ENCODE measurements at regions of chr2 and their contacts with region 1.

Region 1: DNA sequence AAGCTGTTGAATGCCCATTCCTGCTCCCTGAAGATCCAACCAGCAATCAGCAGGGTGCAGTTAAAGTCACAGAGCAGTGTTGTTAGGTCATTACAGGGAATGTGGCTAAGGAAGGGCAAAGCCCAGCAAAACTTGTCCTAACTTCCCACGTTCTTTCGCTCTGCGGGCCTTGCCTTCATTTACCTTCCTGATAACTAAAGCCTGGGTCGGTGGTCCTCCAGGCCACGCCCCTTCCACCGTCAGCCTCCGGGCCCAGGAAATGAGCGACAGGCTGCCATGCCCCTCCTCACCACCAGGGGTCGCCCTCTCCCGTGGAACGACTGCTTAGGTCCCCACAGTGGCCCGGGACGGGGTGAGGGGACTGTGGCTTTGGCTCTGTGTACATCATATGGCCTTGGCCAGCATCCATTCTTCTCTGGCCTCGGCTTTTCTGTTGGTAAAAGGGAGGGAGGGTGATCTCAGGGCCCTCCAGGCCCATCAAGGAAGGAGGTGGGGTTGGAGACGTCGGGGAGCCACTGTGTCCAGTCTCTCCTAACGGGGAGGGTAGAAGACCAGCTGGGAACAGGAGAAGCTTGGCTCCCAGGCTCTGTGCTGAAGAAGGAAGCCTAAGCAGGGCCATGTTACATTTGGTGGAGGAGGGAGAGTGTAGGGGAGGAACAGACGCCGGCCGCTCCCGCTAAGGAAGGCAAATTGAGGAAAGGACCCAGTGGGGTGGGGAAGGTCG is 2.2 kb downstream of the SH2D6 start:
- DNase-seq: peak; percentile 88 to 94 (median 90)
- ATAC-seq: peak; percentile 76
- H3K4me3 ChIP-seq: no peak overlapping the region; the same call in 1 of the 2 replicates
- H3K27ac ChIP-seq: peak overlapping the region; percentile 79
- H3K4me1 ChIP-seq: peaks cover 50 to 59% of the 10 kb centered on the region in 2 experiments
- H3K27me3 ChIP-seq: no peaks in the 10 kb centered on the region
- CTCF ChIP-seq: peak; percentile 95 to 99 (median 98)
- EP300 ChIP-seq: peak; percentile 32; the same call in 1 of the 2 replicates
- POLR2A ChIP-seq: peak; percentile 25; the same call in 1 of the 2 replicates
- RAD21 ChIP-seq: peak; percentile 100

Region 2: GRCh38 chr2:85390941-85391669 is 29.6 kb before region 1 on chr2:
- CTCF ChIA-PET with region 1: no interaction called
- POLR2A ChIA-PET with region 1: no interaction called
- in situ Hi-C with region 1: no loop called
- intact Hi-C with region 1: loop called (anchors 1 kb)
- DNase-seq: peak; percentile 79 to 85 (median 81)
- ATAC-seq: peak; percentile 96
- H3K4me3 ChIP-seq: no peak overlapping the region
- H3K27ac ChIP-seq: no peak overlapping the region
- H3K4me1 ChIP-seq: peaks cover 0 to 5% of the 10 kb centered on the region in 2 experiments; a peak in 1 of 5 replicates
- H3K27me3 ChIP-seq: no peaks in the 10 kb centered on the region
- CTCF ChIP-seq: peak; percentile 88 to 92 (median 91)
- EP300 ChIP-seq: no peak
- POLR2A ChIP-seq: no peak
- RAD21 ChIP-seq: peak; percentile 96 to 97

Region 3: DNA sequence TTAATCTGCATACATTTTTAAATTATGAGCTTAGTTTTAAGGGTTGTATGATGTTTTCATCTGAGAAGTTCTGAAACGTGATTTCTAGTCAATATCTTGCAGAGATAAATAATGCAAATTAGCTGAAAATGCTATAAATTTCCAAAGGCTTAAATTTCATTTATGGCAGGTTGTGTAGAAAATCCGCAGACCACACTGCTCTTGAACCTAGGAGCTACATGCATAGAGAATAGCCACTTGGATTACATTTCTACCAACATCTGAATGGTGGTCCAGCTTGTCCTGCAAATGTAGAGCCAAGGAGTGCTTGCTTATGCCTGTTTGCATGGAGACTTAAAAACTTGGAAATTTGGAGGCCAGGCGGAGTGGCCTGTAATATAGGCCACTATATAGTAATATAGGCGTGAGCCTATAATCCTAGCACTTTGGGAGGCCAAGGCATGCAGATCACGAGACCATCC is 125.1 kb after region 1 on chr2:
- CTCF ChIA-PET with region 1: interaction called, 63 read pairs
- POLR2A ChIA-PET with region 1: interaction called, 1,576 read pairs
- in situ Hi-C with region 1: no loop called
- intact Hi-C with region 1: loop called (anchors 1 kb)
- DNase-seq: peak in 2 of 4 experiments; percentile 30 to 61
- ATAC-seq: peak; percentile 64
- H3K4me3 ChIP-seq: no peak overlapping the region
- H3K27ac ChIP-seq: no peak overlapping the region; the same call in 2 of the 3 replicates
- H3K4me1 ChIP-seq: peaks cover 0 to 22% of the 10 kb centered on the region in 2 experiments; a peak in 3 of 5 replicates
- H3K27me3 ChIP-seq: no peaks in the 10 kb centered on the region
- CTCF ChIP-seq: no peak
- EP300 ChIP-seq: no peak
- POLR2A ChIP-seq: no peak; the same call in none of the 2 replicates
- RAD21 ChIP-seq: no peak

Region 4: DNA sequence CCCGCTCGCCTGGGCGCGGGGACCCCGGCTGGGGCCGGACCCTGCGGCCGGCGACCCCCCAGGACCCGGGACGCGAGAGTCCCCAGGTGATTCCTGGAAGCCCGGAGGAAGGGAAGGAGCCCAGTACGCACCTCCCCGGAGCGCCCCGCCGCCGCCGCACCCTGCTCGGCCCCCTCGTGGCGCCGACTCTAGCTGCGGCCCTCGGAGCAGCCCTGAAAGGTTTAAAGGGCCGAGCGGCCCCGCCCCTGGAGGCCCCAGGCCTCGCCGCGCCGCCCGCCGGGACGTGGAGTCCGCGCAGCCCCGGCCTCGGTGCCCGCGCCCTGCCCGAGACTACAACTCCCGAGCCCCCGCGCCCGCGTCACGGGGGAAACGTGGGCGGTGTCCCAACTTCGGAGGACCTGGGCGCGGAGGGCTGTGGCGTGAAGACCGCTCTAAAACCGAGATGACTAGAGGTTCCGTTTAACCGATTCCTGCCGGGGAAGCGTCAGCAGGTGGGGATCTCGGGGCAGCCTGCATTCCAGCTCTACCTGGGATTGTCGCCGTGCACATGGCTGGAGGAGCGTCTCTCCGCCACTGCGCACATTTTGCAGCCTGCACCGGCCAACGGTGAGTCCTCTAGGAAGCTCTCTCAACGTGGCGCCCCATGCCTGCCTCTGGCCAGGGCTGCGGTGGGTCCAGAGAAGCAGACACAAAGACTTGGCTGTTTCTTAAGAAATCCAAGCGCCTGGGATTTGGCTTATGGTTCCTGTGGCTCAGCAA is 182.0 kb after region 1 on chr2 and contains the start of gene TMEM150A:
- CTCF ChIA-PET with region 1: no interaction called
- POLR2A ChIA-PET with region 1: no interaction called
- in situ Hi-C with region 1: no loop called
- intact Hi-C with region 1: loop called (anchors 5 kb)
- DNase-seq: peak; percentile 88 to 94 (median 90)
- ATAC-seq: peak; percentile 97
- H3K4me3 ChIP-seq: peak within 1 kb of the TSS; percentile 79
- H3K27ac ChIP-seq: peak within 1 kb of the TSS; percentile 27
- H3K4me1 ChIP-seq: peaks cover 9 to 34% of the 10 kb centered on the region in 2 experiments; a peak in 4 of 5 replicates
- H3K27me3 ChIP-seq: no peaks in the 10 kb centered on the region
- CTCF ChIP-seq: peak; percentile 22 to 57 (median 45); a peak in 4 of 6 replicates
- EP300 ChIP-seq: no peak
- POLR2A ChIP-seq: peak; percentile 24; the same call in 1 of the 2 replicates
- RAD21 ChIP-seq: peak; percentile 43 to 46; a peak in 3 of 4 replicates
- polyA plus RNA-seq, gene TMEM150A: 3.9 to 5.3 TPM

Region 5: DNA sequence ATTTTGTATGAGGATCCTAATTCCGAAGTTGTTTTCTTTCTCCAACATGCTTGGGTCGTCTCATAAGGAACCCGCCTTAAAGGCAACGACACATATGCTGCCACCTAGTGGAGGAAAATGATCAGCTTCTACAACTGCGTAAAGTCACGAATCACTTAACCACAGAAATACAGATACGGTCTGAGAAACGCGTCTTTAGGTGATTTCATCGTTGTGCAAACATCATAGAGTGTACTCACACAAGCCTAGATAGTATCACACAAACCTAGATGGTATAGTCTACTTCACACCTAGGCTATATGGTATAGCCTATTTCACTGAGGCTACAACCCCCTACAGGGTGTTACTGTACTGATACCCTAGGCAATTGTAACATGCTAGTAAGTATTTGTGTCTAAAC is 286.6 kb after region 1 on chr2:
- CTCF ChIA-PET with region 1: no interaction called
- POLR2A ChIA-PET with region 1: no interaction called
- in situ Hi-C with region 1: no loop called
- intact Hi-C with region 1: loop called (anchors 5 kb)
- DNase-seq: peak; percentile 73 to 87 (median 74)
- ATAC-seq: peak; percentile 89
- H3K4me3 ChIP-seq: no peak overlapping the region
- H3K27ac ChIP-seq: no peak overlapping the region
- H3K4me1 ChIP-seq: peaks cover 5 to 29% of the 10 kb centered on the region in 2 experiments
- H3K27me3 ChIP-seq: peaks cover 0 to 9% of the 10 kb centered on the region in 2 experiments; a peak in 2 of 5 replicates
- CTCF ChIP-seq: peak; percentile 82 to 92 (median 88)
- EP300 ChIP-seq: 0 out of 2 replicates have a peak, but pooled peaks have one; percentile 10
- POLR2A ChIP-seq: no peak
- RAD21 ChIP-seq: peak; percentile 68 to 79

Region 6: DNA sequence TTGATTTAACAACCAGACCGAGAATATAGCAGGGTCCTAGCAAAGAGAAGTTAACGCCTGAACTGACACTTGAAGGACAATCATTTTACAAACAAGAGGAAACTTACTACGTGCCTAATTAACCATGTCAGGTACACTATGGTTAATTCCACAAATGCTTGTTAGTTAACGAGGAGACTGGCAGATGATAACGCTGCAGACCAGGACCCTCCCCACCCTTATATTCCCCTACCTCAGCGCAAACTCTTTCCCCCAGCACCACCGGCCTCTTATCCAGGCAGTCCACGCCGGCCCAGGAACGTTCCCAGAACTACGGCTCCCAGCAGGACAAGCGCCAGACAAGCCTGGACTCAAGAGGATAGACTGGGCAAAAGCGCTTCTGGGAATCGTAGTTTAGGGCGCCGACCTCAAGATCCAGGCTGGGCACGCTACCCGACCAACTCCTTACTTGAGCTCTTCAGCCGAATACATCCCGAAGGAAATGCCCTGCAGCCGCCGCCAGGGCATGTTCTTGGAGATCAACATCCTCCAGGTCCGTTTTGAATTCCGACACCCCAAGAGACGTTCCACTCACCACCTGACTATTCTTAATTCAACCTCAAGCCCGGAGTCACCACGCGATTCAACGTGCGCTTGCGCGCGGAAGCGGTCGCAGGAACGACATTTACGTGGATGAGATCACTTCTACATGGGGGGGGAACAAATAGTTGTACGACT is 684.7 kb after region 1 on chr2 and contains the start of gene POLR1A:
- CTCF ChIA-PET with region 1: no interaction called
- POLR2A ChIA-PET with region 1: no interaction called
- in situ Hi-C with region 1: no loop called
- intact Hi-C with region 1: loop called (anchors 10 kb)
- DNase-seq: peak; percentile 65 to 92 (median 73)
- ATAC-seq: peak; percentile 95
- H3K4me3 ChIP-seq: peak within 1 kb of the TSS; percentile 72
- H3K27ac ChIP-seq: peak within 1 kb of the TSS; percentile 82
- H3K4me1 ChIP-seq: peaks cover 0 to 17% of the 10 kb centered on the region in 2 experiments; a peak in 2 of 5 replicates
- H3K27me3 ChIP-seq: no peaks in the 10 kb centered on the region
- CTCF ChIP-seq: no peak
- EP300 ChIP-seq: 0 out of 2 replicates have a peak, but pooled peaks have one; percentile 1
- POLR2A ChIP-seq: 0 out of 2 replicates have a peak, but pooled peaks have one; percentile 66
- RAD21 ChIP-seq: no peak
- polyA plus RNA-seq, gene POLR1A: 3.0 to 8.2 TPM

Measured in K562 (cell line).